ENCODE measurements at regions of chr10 and their contacts with region 1.

Region 1: DNA sequence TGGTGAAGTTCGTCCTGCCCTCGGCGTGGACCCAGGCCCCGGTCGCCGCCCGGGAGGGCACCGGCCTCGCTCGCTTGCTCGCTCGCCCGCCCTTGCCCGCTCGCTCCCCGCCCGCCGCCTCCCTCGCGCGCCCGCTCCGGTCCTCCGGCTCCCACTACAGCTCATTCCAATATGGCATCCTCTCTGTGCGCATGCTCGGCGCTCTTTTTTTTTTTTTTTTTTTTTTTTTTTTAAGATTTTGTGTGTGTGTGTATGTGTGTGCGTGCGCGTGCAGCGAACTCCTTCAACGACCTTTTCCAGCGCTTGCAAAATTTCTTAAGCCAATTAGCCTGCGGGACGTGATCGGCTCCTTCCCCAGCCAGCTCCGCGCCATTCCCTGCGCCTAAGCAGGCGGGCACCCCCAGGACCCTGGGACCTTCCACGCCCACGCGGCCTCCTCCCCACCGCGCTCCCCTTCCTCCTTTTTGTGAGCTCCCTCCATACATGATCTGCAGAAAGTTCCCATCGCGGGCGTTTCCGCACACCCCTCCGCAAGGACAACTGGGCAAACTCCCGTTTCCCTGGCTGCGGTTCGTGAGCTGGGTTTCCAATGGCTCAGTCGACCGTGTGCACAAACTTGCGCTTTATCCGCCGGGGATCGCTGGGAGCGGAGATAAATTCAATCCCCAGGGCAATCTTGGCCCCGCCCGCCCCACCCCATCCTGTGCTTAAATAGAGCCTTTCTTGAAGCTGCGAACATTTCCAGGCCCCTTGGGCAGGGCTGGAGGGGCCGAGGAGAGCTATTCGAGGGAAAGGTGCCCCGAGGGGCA is at the start of gene SFMBT2:
- DNase-seq: no peak
- ATAC-seq: peak; percentile 59
- H3K4me3 ChIP-seq: peak within 1 kb of the TSS; percentile 100
- H3K27ac ChIP-seq: peak within 1 kb of the TSS; percentile 86
- H3K4me1 ChIP-seq: peaks cover 15% of the 10 kb centered on the region
- H3K27me3 ChIP-seq: no peaks in the 10 kb centered on the region
- CTCF ChIP-seq: 0 out of 6 replicates have a peak, but pooled peaks of 1 of the 3 experiments have one; percentile 7
- EP300 ChIP-seq: no peak
- POLR2A ChIP-seq: no peak; the same call in 1 of the 2 replicates
- RAD21 ChIP-seq: 0 out of 2 replicates have a peak, but pooled peaks have one; percentile 9
- polyA plus RNA-seq, gene SFMBT2: 2.8 to 4.3 TPM

Region 2: DNA sequence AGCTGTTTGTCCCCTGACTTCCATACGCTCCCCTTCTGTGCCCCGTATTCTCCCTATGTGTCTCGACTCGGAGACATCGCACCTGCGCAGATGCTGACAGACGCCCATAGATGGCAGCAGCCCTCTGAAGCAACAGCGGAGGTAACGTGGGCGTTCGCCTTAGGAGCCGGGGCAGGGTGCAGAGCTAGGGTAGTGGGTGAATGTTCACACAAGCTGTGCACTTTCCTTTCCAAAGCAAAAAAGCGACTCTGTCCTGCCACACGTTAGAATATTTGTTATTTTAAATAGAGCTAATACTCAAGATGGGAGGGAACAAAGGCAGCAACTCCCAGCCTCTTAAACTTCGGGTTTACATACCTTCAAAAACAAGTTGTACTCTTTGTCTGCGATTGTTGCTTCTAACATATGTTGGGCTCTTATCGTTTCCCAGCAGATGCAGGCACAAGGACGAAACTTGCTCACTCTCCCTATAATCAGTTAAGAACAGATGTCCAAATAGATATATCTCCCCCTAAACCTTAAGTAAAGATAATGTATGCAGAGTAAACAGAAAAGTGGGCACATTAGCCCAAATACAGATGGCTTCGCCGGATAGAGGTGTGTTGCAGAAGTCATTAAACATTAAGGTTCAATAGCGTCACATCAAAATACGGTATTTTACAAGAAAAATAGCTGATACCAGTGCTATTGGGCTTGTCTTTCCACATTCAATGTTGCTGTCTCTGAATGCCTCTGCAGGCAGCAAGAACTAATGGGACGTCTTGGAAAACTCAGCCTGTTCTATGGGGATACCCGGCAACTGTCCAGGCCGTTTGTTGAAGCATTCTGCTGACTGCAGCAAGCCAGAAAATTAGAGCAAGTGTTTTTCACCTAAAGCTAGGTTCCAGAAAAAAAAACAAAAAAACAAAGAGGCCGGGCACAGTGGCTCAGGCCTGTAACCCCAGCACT is 490.7 kb before region 1 on chr10:
- CTCF ChIA-PET with region 1: interaction called, 51 read pairs
- POLR2A ChIA-PET with region 1: no interaction called
- RAD21 ChIA-PET with region 1: interaction called, 11 read pairs
- SMC1A ChIA-PET with region 1: interaction called, 25 read pairs
- in situ Hi-C with region 1: no loop called
- intact Hi-C with region 1: loop called (anchors 2 kb)
- DNase-seq: no peak
- ATAC-seq: peak; percentile 99
- H3K4me3 ChIP-seq: no peak overlapping the region
- H3K27ac ChIP-seq: no peak overlapping the region
- H3K4me1 ChIP-seq: peaks cover under 1% of the 10 kb centered on the region
- H3K27me3 ChIP-seq: no peaks in the 10 kb centered on the region
- CTCF ChIP-seq: peak; percentile 92 to 97 (median 95)
- EP300 ChIP-seq: no peak
- POLR2A ChIP-seq: no peak
- RAD21 ChIP-seq: peak; percentile 99

Region 3: GRCh38 chr10:7260412-7260900 is 150.6 kb before region 1 on chr10:
- CTCF ChIA-PET with region 1: interaction called, 17 read pairs
- POLR2A ChIA-PET with region 1: no interaction called
- RAD21 ChIA-PET with region 1: interaction called, 12 read pairs
- SMC1A ChIA-PET with region 1: interaction called, 4 read pairs
- in situ Hi-C with region 1: no loop called
- intact Hi-C with region 1: loop called (anchors 2 kb)
- DNase-seq: peak; percentile 30
- ATAC-seq: peak; percentile 91
- H3K4me3 ChIP-seq: no peak overlapping the region
- H3K27ac ChIP-seq: no peak overlapping the region
- H3K4me1 ChIP-seq: peaks cover 22% of the 10 kb centered on the region
- H3K27me3 ChIP-seq: no peaks in the 10 kb centered on the region
- CTCF ChIP-seq: peak; percentile 60 to 65 (median 63)
- EP300 ChIP-seq: no peak
- POLR2A ChIP-seq: no peak
- RAD21 ChIP-seq: peak; percentile 76

Region 4: DNA sequence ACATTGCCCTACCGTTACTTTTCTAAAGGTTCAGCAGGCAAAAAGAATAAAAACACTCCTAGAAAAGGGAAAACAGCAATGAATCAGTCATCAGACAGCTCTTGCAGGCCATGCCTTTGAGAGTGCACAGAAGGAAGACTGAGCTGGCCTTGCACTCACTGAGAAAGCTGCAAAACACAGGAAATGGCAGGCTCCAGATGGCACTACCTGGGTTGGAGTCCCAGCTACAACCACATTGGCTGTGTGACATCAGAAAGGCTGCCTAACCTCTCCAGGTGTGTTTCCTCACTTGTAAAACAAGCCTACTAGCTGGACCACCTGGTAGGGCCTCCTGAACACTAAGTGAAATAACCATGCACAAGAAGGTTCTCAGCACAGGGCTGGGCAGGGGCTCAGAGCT is 114.0 kb before region 1 on chr10:
- CTCF ChIA-PET with region 1: no interaction called
- POLR2A ChIA-PET with region 1: no interaction called
- RAD21 ChIA-PET with region 1: no interaction called
- SMC1A ChIA-PET with region 1: no interaction called
- in situ Hi-C with region 1: no loop called
- intact Hi-C with region 1: no loop called
- DNase-seq: no peak
- ATAC-seq: no peak
- H3K4me3 ChIP-seq: no peak overlapping the region
- H3K27ac ChIP-seq: no peak overlapping the region
- H3K4me1 ChIP-seq: no peaks in the 10 kb centered on the region
- H3K27me3 ChIP-seq: no peaks in the 10 kb centered on the region
- CTCF ChIP-seq: no peak
- EP300 ChIP-seq: no peak
- POLR2A ChIP-seq: no peak
- RAD21 ChIP-seq: no peak

Region 5: DNA sequence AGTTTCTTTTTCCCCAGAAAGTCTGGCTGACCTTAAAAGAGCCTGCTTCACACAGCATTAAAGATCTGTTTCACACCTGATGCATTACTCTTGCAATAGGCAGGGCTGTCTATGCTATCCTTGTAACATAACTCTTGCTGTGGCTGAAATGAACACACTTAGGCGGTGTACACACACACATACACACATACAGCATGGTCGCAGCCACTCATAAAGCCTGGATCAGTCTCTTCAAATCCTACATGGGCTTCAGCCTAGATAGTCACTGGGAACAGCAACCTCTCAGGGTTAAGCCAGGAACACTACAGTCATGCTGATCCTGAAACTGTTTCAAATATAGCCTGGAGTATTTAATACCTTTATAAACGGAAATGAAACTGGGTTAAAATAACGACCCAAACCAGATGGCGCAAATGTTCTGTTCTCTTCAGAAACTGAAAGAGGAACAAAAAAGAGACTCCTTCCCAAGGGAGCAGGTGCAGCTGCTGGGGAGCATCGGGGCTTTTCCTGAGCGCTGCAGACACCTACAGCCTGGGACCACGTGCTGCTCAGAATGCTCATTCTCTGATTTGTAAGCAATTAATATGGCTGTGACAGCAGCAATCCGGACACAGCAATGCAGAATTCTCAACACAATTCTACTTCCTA is 60.8 kb after region 1 on chr10:
- CTCF ChIA-PET with region 1: interaction called, 4 read pairs
- POLR2A ChIA-PET with region 1: no interaction called
- RAD21 ChIA-PET with region 1: interaction called, 8 read pairs
- SMC1A ChIA-PET with region 1: interaction called, 12 read pairs
- in situ Hi-C with region 1: no loop called
- intact Hi-C with region 1: loop called (anchors 2 kb)
- DNase-seq: peak; percentile 98
- ATAC-seq: peak; percentile 87
- H3K4me3 ChIP-seq: peak overlapping the region; percentile 51; the same call in 1 of the 2 replicates
- H3K27ac ChIP-seq: peak overlapping the region; percentile 88
- H3K4me1 ChIP-seq: peaks cover 67% of the 10 kb centered on the region
- H3K27me3 ChIP-seq: no peaks in the 10 kb centered on the region
- CTCF ChIP-seq: no peak
- EP300 ChIP-seq: peak; percentile 100
- POLR2A ChIP-seq: peak; percentile 51
- RAD21 ChIP-seq: 0 out of 2 replicates have a peak, but pooled peaks have one; percentile 10

Region 6: GRCh38 chr10:7491949-7492659 is 81.0 kb after region 1 on chr10:
- CTCF ChIA-PET with region 1: interaction called, 6 read pairs
- POLR2A ChIA-PET with region 1: interaction called, 5 read pairs
- RAD21 ChIA-PET with region 1: interaction called, 14 read pairs
- SMC1A ChIA-PET with region 1: interaction called, 4 read pairs
- in situ Hi-C with region 1: no loop called
- intact Hi-C with region 1: no loop called
- DNase-seq: peak; percentile 74
- ATAC-seq: peak; percentile 91
- H3K4me3 ChIP-seq: peak overlapping the region; percentile 41; the same call in 1 of the 2 replicates
- H3K27ac ChIP-seq: peak overlapping the region; percentile 80
- H3K4me1 ChIP-seq: peaks cover 37% of the 10 kb centered on the region
- H3K27me3 ChIP-seq: no peaks in the 10 kb centered on the region
- CTCF ChIP-seq: no peak
- EP300 ChIP-seq: 0 out of 4 replicates have a peak, but pooled peaks of 1 of the 2 experiments have one; percentile 57
- POLR2A ChIP-seq: no peak
- RAD21 ChIP-seq: no peak

Measured in GM12878 (cell line).